B cell (primary cell): ENCODE measurements at regions of chr2 and their contacts with region 1.

Region 1: DNA sequence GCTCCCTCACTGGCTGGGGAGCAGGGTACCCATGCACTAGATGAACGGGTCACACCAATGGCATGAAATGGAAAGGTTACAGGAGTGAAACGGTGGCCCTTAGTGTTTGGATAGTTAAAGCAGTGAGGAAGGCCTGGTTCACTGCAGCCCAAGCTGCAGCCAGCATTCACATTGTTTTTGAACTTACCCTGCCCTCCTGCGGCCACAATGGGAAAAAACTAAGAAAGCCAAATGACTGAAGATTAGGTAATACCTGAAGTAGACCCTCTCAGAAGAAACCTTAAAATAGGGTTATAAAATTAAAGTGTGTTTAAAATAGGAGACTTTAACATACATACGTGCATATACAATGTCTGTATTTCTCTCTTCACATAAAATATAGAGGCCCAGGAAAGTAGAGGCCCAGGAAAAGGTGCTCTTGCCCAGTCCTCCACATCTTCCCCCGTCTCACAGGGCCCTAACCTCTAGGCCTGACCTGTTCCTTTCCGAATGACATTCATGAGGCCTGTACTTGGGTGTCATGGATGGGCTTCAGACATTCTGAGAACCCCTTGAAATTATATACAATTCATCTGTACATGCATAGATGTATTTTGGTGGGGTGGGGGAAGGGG is 33.3 kb downstream of the DOK1 start:
- DNase-seq: peak; percentile 83
- ATAC-seq: peak; percentile 92
- H3K4me3 ChIP-seq: no peak overlapping the region
- H3K4me3 Mint-ChIP-seq: no peak overlapping the region
- H3K27ac ChIP-seq: no peak overlapping the region
- H3K27ac Mint-ChIP-seq: no peak overlapping the region
- H3K4me1 ChIP-seq: peaks cover 0 to 6% of the 10 kb centered on the region in 2 donors
- H3K4me1 Mint-ChIP-seq: peaks cover 9% of the 10 kb centered on the region
- H3K27me3 ChIP-seq: peaks cover 0 to 5% (median 5%) of the 10 kb centered on the region in 4 experiments
- H3K27me3 Mint-ChIP-seq: peaks cover 22% of the 10 kb centered on the region
- CTCF ChIP-seq: peak; percentile 80

Region 2: DNA sequence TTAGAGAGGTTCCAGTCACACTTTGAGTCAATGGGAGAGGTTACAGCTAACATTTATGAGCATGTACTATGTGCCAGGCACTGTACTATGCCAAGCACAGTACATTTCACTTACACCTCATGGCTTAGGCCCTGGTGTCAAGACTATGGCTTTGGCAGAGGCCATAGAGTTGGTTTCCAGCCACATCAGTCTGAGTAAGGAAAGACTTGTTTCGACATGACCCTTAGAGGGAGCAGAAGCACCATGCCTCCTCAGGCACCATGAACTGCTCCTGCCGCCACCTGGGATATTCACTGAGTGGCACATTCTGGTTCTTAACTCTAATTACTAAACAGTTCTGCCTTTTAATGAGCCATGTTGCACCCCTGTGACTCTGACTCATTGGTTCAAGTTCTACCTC is 648.4 kb before region 1 on chr2:
- CTCF ChIA-PET with region 1: no interaction called
- POLR2A ChIA-PET with region 1: no interaction called
- intact Hi-C with region 1: no loop called
- DNase-seq: no peak
- ATAC-seq: no peak
- H3K4me3 ChIP-seq: no peak overlapping the region
- H3K4me3 Mint-ChIP-seq: no peak overlapping the region
- H3K27ac ChIP-seq: no peak overlapping the region
- H3K27ac Mint-ChIP-seq: no peak overlapping the region
- H3K4me1 ChIP-seq: peaks cover 0 to 12% of the 10 kb centered on the region in 2 donors
- H3K4me1 Mint-ChIP-seq: peaks cover 42% of the 10 kb centered on the region
- H3K27me3 ChIP-seq: no peaks in the 10 kb centered on the region
- H3K27me3 Mint-ChIP-seq: no peaks in the 10 kb centered on the region
- CTCF ChIP-seq: no peak

Region 3: GRCh38 chr2:74334931-74335333 is 252.8 kb before region 1 on chr2:
- CTCF ChIA-PET with region 1: interaction called, 14 read pairs
- POLR2A ChIA-PET with region 1: no interaction called
- intact Hi-C with region 1: no loop called
- DNase-seq: peak; percentile 76
- ATAC-seq: peak; percentile 74
- H3K4me3 ChIP-seq: no peak overlapping the region
- H3K4me3 Mint-ChIP-seq: no peak overlapping the region
- H3K27ac ChIP-seq: no peak overlapping the region
- H3K27ac Mint-ChIP-seq: no peak overlapping the region
- H3K4me1 ChIP-seq: no peaks in the 10 kb centered on the region
- H3K4me1 Mint-ChIP-seq: no peaks in the 10 kb centered on the region
- H3K27me3 ChIP-seq: no peaks in the 10 kb centered on the region
- H3K27me3 Mint-ChIP-seq: no peaks in the 10 kb centered on the region
- CTCF ChIP-seq: peak; percentile 100

Region 4: DNA sequence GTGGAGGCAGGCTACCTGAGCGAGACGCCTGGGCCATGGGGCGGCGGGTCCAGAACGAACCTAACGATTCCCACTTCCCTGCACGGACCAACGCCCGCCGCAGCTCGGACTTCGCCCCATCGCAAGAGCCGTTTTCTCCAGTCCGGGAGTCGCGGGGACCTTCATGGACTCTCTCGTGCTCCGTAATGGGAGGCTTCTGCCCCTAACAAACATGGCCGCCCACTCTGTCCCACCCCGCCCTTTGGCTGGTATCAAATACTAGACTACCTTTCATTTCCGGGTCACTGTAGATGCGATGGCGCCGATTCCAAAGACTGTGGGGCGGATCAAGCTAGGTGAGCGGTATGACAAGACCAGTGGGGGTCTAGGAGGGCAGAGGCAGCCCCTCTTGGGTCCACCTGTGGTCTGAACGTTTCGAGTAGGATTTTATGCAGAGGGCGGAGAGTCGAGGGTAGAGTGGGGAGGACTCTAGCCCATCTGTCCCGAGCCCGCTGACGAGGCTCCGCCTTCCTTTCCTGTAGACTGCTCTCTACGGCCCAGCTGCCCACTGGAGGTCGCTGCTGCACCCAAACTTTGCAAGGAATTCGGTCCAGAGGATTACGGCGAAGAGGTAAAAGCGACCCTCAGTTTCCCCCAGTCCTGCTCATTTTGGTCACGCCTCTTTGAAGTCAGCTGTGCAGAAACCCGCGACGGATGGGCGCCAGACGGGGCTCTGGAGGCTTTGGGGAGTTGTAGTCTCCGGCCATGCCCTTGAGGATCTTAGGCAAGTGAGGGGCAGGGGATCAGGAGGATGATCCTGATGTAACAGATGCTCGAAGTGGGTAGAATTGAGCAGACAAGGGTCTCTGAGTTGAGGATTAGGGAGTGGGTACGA is 104.7 kb before region 1 on chr2 and contains the starts of genes CCDC142 and TTC31:
- CTCF ChIA-PET with region 1: interaction called, 149 read pairs
- POLR2A ChIA-PET with region 1: interaction called, 12 read pairs
- intact Hi-C with region 1: no loop called
- DNase-seq: peak; percentile 97
- ATAC-seq: peak; percentile 90
- H3K4me3 ChIP-seq: peak within 1 kb of the TSS; percentile 74 to 96 (median 88)
- H3K4me3 Mint-ChIP-seq: peak within 1 kb of the TSS; percentile 100
- H3K27ac ChIP-seq: peak within 1 kb of the TSS; percentile 71 to 84
- H3K27ac Mint-ChIP-seq: peak within 1 kb of the TSS; percentile 99
- H3K4me1 ChIP-seq: peaks cover 21 to 29% of the 10 kb centered on the region in 2 donors
- H3K4me1 Mint-ChIP-seq: peaks cover 34% of the 10 kb centered on the region
- H3K27me3 ChIP-seq: no peaks in the 10 kb centered on the region
- H3K27me3 Mint-ChIP-seq: no peaks in the 10 kb centered on the region
- CTCF ChIP-seq: peak; percentile 90
- total RNA-seq, gene CCDC142: 61.6 and 69.3 TPM in 2 replicates
- total RNA-seq, gene TTC31: 69.4 and 72.3 TPM in 2 replicates

Region 5: GRCh38 chr2:74538881-74539339 is 48.9 kb before region 1 on chr2:
- CTCF ChIA-PET with region 1: interaction called, 71 read pairs
- POLR2A ChIA-PET with region 1: interaction called, 3 read pairs
- intact Hi-C with region 1: no loop called
- DNase-seq: peak; percentile 76
- ATAC-seq: peak; percentile 80
- H3K4me3 ChIP-seq: peak overlapping the region in 4 of 5 experiments; percentile 49 to 66 (median 54)
- H3K4me3 Mint-ChIP-seq: peak overlapping the region; percentile 89
- H3K27ac ChIP-seq: peak overlapping the region; percentile 76 to 90
- H3K27ac Mint-ChIP-seq: peak overlapping the region; percentile 95
- H3K4me1 ChIP-seq: peaks cover 18 to 29% of the 10 kb centered on the region in 2 donors
- H3K4me1 Mint-ChIP-seq: peaks cover 29% of the 10 kb centered on the region
- H3K27me3 ChIP-seq: no peaks in the 10 kb centered on the region
- H3K27me3 Mint-ChIP-seq: no peaks in the 10 kb centered on the region
- CTCF ChIP-seq: no peak

Region 6: GRCh38 chr2:74573747-74574562 is 13.8 kb before region 1 on chr2:
- CTCF ChIA-PET with region 1: interaction called, 103 read pairs
- POLR2A ChIA-PET with region 1: interaction called, 6 read pairs
- intact Hi-C with region 1: loop called (anchors 2 kb)
- DNase-seq: peak; percentile 69
- ATAC-seq: peak; percentile 69
- H3K4me3 ChIP-seq: peak overlapping the region in 4 of 5 experiments; percentile 21 to 34 (median 32)
- H3K4me3 Mint-ChIP-seq: peak overlapping the region; percentile 84
- H3K27ac ChIP-seq: peak overlapping the region; percentile 9 to 74
- H3K27ac Mint-ChIP-seq: peak overlapping the region; percentile 92
- H3K4me1 ChIP-seq: peaks cover 58 to 68% of the 10 kb centered on the region in 2 donors
- H3K4me1 Mint-ChIP-seq: peaks cover 46% of the 10 kb centered on the region
- H3K27me3 ChIP-seq: no peaks in the 10 kb centered on the region
- H3K27me3 Mint-ChIP-seq: no peaks in the 10 kb centered on the region
- CTCF ChIP-seq: no peak